ENCODE measurements at regions of chr17 and their contacts with region 1.

Region 1: GRCh38 chr17:61338000-61338798 is 61.4 kb upstream of the TBX2 start:
- DNase-seq: peak; percentile 99
- ATAC-seq: peak; percentile 76
- H3K4me3 ChIP-seq: peak overlapping the region; percentile 46; the same call in 1 of the 2 replicates
- H3K27ac ChIP-seq: peak overlapping the region; percentile 93
- H3K4me1 ChIP-seq: peaks cover 64% of the 10 kb centered on the region
- H3K27me3 ChIP-seq: no peaks in the 10 kb centered on the region
- CTCF ChIP-seq: no peak

Region 2: DNA sequence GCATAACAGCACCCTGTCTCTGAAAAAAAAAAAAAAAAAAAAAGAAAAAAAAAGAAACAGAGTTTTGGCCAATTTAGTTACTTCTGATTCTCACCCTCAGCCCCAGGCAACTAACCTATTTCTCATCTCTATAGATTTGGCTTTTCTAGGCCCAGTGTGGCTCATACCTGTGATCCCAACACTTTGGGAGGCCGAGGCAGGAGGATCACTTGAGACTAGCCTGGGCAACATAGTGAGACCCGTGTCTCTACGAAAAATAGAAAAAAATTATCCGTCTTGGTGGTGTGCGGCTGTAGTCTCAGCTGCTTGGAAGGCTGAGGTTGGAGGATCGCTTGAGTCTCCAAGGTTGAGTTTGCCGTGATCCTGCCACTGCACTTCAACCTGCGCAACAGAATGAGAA is 1436.6 kb before region 1 on chr17:
- CTCF ChIA-PET with region 1: no interaction called
- POLR2A ChIA-PET with region 1: no interaction called
- intact Hi-C with region 1: no loop called
- DNase-seq: no peak
- ATAC-seq: no peak
- H3K4me3 ChIP-seq: no peak overlapping the region
- H3K27ac ChIP-seq: no peak overlapping the region
- H3K4me1 ChIP-seq: peaks cover 5% of the 10 kb centered on the region; the same call in 1 of the 2 replicates
- H3K27me3 ChIP-seq: no peaks in the 10 kb centered on the region
- CTCF ChIP-seq: no peak

Region 3: GRCh38 chr17:61307905-61308886 is 30.0 kb before region 1 on chr17:
- CTCF ChIA-PET with region 1: no interaction called
- POLR2A ChIA-PET with region 1: interaction called, 6 read pairs
- intact Hi-C with region 1: loop called (anchors 2 kb)
- DNase-seq: peak; percentile 75
- ATAC-seq: peak; percentile 81
- H3K4me3 ChIP-seq: no peak overlapping the region
- H3K27ac ChIP-seq: peak overlapping the region; percentile 55
- H3K4me1 ChIP-seq: peaks cover 25% of the 10 kb centered on the region
- H3K27me3 ChIP-seq: no peaks in the 10 kb centered on the region
- CTCF ChIP-seq: no peak

Region 4: GRCh38 chr17:61361084-61361483 is 22.9 kb after region 1 on chr17:
- CTCF ChIA-PET with region 1: interaction called, 3 read pairs
- POLR2A ChIA-PET with region 1: interaction called, 5 read pairs
- intact Hi-C with region 1: loop called (anchors 1 kb)
- DNase-seq: peak; percentile 77
- ATAC-seq: no peak
- H3K4me3 ChIP-seq: no peak overlapping the region
- H3K27ac ChIP-seq: no peak overlapping the region
- H3K4me1 ChIP-seq: peaks cover 31% of the 10 kb centered on the region
- H3K27me3 ChIP-seq: no peaks in the 10 kb centered on the region
- CTCF ChIP-seq: no peak

Region 5: GRCh38 chr17:61399131-61400057 is 61.2 kb after region 1 on chr17 and contains the start of gene TBX2:
- CTCF ChIA-PET with region 1: no interaction called
- POLR2A ChIA-PET with region 1: interaction called, 4 read pairs
- intact Hi-C with region 1: loop called (anchors 2 kb)
- DNase-seq: peak; percentile 85
- ATAC-seq: peak; percentile 68
- H3K4me3 ChIP-seq: peak within 1 kb of the TSS; percentile 72
- H3K27ac ChIP-seq: no peak within 1 kb of the TSS
- H3K4me1 ChIP-seq: peaks cover 20% of the 10 kb centered on the region
- H3K27me3 ChIP-seq: no peaks in the 10 kb centered on the region
- CTCF ChIP-seq: 0 out of 2 replicates have a peak, but pooled peaks have one; percentile 12
- total RNA-seq, gene TBX2: 7.1 and 8.5 TPM in 2 replicates

Region 6: DNA sequence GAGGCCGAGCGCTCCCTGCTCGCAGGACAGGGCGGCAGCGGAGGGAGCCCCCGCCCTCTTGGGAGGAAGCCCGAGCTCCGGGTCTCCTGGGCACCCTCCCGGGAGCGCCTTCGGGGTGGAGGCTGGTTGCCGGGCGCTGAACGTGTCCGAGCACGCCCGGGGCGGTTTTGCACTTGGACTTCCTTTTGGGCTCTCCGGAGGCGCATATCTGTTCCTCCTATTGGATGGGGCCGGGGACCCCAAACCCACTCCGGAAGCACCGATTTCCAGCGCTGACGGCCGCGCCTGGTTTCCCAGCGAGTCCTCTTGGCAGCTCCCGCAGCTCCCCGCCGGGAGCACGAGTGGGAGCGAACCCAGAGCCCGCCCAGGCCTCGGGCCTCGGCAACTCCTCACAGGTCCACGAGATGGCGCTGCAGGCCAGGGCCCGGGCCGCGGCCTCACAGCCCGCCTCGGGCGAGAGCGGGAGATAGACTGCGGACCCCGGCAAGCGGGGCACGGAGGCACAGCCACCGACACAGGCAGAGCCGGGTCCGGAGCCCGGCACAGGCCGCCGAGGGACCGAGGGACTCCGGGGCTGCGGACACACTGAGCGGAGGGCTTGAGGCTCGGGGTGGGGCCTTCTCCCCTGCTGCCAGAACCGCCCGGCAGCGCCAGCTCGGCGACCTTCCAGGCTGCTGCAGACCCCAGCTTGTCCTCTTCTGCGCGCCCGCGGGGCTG is 74.1 kb after region 1 on chr17:
- CTCF ChIA-PET with region 1: no interaction called
- POLR2A ChIA-PET with region 1: no interaction called
- intact Hi-C with region 1: no loop called
- DNase-seq: peak; percentile 89
- ATAC-seq: peak; percentile 45
- H3K4me3 ChIP-seq: peak overlapping the region; percentile 84
- H3K27ac ChIP-seq: peak overlapping the region; percentile 81
- H3K4me1 ChIP-seq: peaks cover 31% of the 10 kb centered on the region
- H3K27me3 ChIP-seq: no peaks in the 10 kb centered on the region
- CTCF ChIP-seq: peak; percentile 98

Region 7: GRCh38 chr17:61568219-61569072 is 230.2 kb after region 1 on chr17:
- CTCF ChIA-PET with region 1: no interaction called
- POLR2A ChIA-PET with region 1: no interaction called
- intact Hi-C with region 1: loop called (anchors 5 kb)
- DNase-seq: peak; percentile 99
- ATAC-seq: peak; percentile 91
- H3K4me3 ChIP-seq: peak overlapping the region; percentile 56
- H3K27ac ChIP-seq: peak overlapping the region; percentile 97
- H3K4me1 ChIP-seq: peaks cover 36% of the 10 kb centered on the region
- H3K27me3 ChIP-seq: no peaks in the 10 kb centered on the region
- CTCF ChIP-seq: no peak

Region 8: GRCh38 chr17:61816538-61816937 is 478.3 kb after region 1 on chr17:
- CTCF ChIA-PET with region 1: no interaction called
- POLR2A ChIA-PET with region 1: no interaction called
- intact Hi-C with region 1: no loop called
- DNase-seq: no peak
- ATAC-seq: no peak
- H3K4me3 ChIP-seq: no peak overlapping the region
- H3K27ac ChIP-seq: no peak overlapping the region
- H3K4me1 ChIP-seq: no peaks in the 10 kb centered on the region
- H3K27me3 ChIP-seq: no peaks in the 10 kb centered on the region
- CTCF ChIP-seq: no peak